Cardiac septum (tissue), 1 donor: ENCODE measurements at regions of chr13 and their contacts with region 1.

Region 1: GRCh38 chr13:30465585-30466357 is at the start of gene HMGB1:
- DNase-seq: peak; percentile 99
- total RNA-seq, gene HMGB1: 153 TPM

Region 2: DNA sequence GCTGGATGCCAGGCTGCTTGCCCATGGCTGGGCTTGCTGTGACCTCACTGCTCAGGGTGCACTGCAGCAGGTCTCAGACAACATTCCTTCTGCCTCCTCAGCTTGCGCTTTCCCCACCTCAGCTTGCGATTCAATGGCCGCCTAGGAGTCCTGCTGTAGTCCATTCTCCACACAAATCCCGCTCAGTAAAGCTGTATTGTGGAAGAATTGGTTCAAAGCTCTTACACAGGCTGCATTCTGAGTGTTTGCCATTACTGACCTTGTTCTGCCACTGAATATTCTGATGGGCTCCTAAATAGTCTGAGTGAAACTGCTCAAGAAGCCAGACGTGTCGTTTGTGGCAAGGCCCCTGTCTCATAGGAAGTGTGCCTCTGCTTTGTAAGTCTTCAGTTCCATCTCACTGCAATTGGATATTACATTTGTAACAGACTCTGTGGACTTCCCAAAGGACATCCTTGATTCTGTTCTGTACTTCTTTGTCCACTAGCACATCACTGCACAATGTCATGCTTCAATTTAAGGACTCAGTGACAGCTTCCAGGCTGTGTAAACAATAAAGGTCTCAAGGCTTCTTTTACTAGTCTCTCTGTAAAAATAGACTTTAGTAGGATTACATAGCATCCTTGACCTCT is 208.2 kb before region 1 on chr13:
- intact Hi-C with region 1: loop called (anchors 5 kb)
- DNase-seq: no peak

Region 3: DNA sequence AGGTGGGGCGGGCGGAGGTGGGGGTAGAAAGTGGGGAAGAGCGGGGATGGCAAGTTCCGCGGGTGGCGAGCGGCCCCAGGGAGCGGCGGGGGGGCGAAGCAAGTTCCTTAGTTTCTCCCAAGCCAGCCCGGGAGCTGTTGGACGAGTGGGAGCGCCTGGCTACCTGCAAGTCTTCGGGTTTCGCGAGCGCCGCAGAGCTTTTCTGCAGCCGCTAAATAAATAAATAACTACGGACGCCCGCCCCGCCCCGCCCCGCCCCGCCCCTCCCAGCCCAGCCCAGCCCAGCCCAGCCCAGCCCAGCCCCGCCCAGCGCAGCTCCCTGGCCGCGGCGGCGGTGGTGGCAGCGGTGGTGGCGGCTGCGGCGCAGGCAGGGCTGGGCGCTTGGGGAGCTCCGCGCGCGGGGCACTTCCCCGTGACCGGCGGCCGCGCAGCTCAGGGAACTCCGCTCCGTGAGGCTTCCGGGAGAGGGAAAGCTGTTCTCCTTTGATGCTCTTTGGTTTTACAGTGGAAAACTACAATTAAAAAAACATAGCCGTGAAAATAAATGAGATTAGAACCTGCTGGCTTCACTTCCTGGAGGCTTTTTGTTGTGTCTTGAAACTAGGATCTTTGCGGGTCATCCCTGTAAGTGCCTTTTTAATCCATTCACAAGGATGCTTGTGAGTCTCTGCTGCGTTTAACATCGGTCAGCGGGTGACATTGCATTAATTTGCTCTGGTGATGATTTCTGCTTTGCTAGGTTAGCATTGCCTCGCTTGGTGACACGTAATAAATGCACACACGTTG is 43.5 kb before region 1 on chr13 and contains the start of gene UBE2L5:
- intact Hi-C with region 1: loop called (anchors 2 kb)
- DNase-seq: peak; percentile 91
- total RNA-seq, gene UBE2L5: not detected

Region 4: DNA sequence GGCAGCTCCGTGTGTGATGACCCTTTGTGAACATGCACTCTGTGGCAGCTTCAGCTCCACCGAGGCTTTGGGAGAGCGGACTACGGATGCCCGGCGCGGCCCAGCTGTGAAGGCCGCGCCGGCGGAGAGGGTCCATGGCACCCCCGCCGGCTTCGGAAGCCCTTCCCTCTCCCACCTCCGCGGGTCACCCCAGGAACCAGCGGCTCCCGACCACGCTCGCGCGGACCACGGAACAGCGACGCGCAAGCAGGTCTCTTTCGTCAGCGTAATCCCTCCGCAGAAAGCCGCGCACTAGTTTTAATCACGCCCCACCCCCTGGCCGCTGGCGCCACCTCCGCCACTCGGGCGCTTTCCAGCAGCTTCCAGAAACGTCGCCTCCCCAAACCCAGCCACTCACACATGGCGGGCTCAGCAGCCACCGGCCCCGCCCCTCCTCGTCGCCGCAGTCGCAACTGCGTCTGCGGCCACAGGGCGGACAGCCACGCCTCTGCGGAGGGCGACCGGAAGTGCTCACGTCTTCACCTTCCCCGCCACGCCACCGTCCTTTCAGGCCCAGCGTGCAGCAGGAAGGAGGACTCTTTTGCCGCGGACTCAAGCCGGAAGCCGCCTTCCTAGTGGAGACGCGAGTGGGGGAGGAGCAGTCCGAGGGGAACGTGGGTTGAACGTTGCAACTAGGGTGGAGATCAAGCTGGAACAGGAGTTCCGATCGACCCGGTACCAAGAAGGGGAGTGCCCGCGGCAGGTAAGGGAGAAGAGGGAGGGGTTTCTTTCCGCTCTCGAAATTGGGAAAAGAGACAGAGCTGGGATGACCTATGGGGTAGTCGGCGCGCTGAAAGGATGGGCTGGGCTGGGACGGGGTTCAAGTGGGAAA is 151.8 kb after region 1 on chr13 and contains the start of gene USPL1:
- intact Hi-C with region 1: loop called (anchors 1 kb)
- DNase-seq: peak; percentile 99
- total RNA-seq, gene USPL1: 9.8 TPM